Psoas muscle (tissue), 8 donors: ENCODE measurements at regions of chr7 and their contacts with region 1.

Region 1: DNA sequence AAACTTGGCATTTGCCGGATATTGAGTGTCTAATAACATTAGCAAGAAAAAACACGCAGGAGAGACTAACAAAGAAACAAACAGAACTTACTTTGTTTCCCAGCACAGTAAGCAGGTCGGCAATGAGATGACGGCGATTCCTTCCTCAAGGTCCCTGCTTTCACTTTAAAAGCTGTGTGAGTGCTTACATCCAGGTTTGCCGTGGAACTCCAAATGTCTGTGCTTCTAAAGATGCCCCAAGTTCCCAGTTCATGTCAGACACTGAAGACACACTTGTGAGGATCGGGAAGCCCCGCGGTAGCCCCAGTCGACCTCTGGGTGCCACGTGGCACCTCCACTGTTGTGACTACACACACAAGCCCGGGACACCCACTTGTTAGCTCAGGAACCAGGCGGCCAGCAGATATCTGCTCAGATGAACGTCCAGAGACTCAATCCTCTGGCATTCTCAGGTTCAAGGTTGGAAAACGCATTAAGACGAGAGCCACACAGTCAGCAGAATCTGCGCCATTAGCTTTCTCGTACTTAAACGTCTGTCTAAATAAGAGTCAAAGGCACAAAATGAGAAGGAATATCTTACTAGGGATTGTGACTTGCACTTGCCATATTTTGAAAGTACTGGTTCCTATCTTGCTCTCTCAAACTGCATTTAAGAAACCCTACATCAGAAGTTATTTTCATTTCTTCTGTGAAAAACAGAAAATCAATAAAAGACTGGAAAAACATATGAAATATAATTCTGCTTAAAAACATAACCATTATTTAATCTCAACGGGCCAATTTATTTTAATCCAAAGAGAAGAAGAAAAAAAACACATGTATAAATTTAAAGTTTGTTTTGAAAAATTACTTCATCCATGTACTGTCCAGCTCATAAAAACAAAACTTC is 207.6 kb upstream of the KLF14 start:
- DNase-seq: peak; percentile 79 to 94
- ATAC-seq: peak; percentile 82 to 89 (median 86)
- H3K4me3 ChIP-seq: peak overlapping the region; percentile 81
- H3K27ac ChIP-seq: peak overlapping the region; percentile 94
- H3K4me1 ChIP-seq: peaks cover 52% of the 10 kb centered on the region
- H3K27me3 ChIP-seq: no peaks in the 10 kb centered on the region
- CTCF ChIP-seq: no peak

Region 2: DNA sequence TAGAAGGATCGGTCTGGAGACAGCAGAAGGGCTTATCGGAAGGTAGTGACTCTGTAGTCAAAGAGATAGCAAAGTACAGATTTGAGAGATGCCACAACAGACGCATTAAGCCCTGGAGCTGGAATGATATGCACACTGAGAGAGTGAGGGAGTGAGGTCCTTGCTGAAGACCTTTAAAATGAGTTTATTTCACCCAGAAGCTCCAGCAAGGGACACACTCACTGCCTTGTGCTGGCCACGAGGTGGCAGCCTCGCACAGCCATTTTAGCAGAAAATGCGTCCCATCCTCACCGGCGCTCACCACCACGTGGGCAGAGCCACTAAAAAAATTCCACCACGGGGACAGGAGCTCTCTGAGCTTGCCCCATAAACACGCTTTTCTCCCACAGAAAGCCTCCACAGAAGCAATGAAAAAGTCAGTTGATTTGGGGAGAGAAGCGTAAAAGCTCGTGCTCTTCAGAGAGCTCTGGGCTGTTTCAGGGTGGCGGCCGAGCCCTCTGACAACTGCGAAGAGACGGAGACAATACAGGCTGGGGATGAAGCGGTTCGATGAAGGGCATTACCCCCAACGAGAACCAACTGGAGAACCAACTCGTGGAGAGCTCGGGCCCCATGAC is 44.6 kb before region 1 on chr7:
- intact Hi-C with region 1: loop called (anchors 5 kb)
- DNase-seq: peak; percentile 81 to 89
- ATAC-seq: peak; percentile 31 to 58 (median 44)
- H3K4me3 ChIP-seq: peak overlapping the region; percentile 0
- H3K27ac ChIP-seq: peak overlapping the region; percentile 94
- H3K4me1 ChIP-seq: peaks cover 89% of the 10 kb centered on the region
- H3K27me3 ChIP-seq: no peaks in the 10 kb centered on the region
- CTCF ChIP-seq: peak; percentile 77

Region 3: DNA sequence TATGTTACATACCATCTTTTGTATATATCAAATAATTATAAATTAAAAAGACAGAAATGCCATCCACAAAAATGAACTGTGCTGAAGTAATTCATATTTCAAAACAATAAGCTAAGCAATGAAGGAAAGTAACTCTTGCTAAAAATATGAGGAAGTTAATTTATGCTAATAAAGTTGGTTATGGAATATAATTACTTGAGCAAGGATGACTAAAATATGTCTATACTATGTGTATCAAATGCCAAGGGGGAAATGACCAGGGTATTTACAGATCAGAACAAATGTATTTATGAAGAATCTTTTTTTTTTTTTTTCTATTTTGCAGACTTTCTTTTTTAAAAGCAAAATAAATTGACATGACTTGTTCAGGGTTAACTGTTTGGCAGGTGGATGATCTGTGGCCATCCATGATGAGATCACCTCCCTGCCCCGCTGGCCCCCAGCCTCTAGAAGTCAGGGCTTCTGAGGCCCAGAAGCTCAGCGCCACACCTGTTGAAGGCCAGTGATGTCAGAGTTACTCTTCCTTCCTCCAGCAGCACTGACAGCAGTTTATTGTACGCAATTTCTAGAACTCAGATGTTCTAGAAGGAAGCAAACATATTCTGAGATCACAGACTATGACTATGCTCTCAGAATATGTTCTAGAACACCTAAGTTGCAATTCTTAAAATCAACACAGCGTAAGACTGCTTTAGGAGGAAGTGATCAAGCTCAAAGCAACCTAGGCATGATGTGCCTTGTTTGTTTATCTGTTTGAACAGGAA is 11.5 kb before region 1 on chr7:
- intact Hi-C with region 1: loop called in 1 of 2 experiments (anchors 1 kb)
- DNase-seq: peak; percentile 58 to 74
- ATAC-seq: peak; percentile 52 to 70 (median 69)
- H3K4me3 ChIP-seq: peak overlapping the region; percentile 40
- H3K27ac ChIP-seq: peak overlapping the region; percentile 94
- H3K4me1 ChIP-seq: peaks cover 78% of the 10 kb centered on the region
- H3K27me3 ChIP-seq: no peaks in the 10 kb centered on the region
- CTCF ChIP-seq: no peak

Region 4: DNA sequence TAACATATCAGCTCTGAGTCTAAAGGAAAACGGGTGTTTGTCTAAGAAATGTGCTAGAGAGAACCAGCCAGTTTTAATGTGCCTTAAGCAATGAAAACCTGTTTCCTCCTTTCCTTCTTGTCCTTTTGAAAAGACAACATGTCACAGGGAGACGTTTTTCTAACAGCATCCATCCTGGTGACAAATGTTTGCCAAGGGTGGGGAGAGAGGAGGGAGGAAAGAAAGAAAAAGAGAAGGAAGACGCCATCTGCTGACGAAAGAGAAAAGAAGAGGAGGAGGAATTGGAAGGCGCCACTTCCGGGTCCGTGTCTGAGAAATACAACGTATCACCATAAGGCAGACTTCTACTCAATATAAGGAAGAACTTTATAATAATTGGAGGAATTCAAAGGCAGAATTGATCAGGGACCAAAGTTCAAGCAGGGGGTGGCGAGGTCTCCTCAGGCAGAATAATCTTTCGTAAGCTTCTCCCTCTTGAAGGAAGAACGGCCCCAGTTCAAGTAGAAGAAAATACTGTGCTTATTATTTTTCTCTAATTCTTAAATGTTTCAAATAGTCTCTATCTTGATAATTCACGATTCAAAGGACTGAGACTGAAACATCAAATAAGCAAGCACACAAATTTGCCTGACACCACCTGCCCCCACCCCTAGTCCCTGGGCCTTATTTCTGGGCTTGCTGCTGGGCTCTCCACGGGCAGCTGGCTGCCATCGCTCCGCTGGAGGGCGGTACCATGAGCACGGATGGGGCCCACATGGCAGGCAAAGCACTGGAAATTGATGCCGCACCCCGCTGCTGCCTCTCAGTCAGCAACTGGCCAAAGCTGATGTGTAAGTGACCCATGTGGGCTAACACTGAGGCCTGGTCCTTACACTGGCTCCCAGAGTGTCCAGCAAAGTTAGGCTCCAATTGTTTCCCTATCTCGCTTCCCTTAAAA is 66.1 kb after region 1 on chr7:
- intact Hi-C with region 1: loop called in 1 of 2 experiments (anchors 5 kb)
- DNase-seq: peak; percentile 50 to 64
- ATAC-seq: peak; percentile 38 to 48 (median 42)
- H3K4me3 ChIP-seq: no peak overlapping the region
- H3K27ac ChIP-seq: peak overlapping the region; percentile 72
- H3K4me1 ChIP-seq: peaks cover 60% of the 10 kb centered on the region
- H3K27me3 ChIP-seq: no peaks in the 10 kb centered on the region
- CTCF ChIP-seq: peak; percentile 45

Region 5: GRCh38 chr7:131218727-131219128 is 277.2 kb after region 1 on chr7:
- intact Hi-C with region 1: no loop called
- DNase-seq: no peak
- ATAC-seq: no peak
- H3K4me3 ChIP-seq: no peak overlapping the region
- H3K27ac ChIP-seq: no peak overlapping the region
- H3K4me1 ChIP-seq: peaks cover 6% of the 10 kb centered on the region
- H3K27me3 ChIP-seq: no peaks in the 10 kb centered on the region
- CTCF ChIP-seq: no peak